Heart right ventricle (tissue), 16 donors: ENCODE measurements at regions of chr5 and their contacts with region 1.

Region 1: DNA sequence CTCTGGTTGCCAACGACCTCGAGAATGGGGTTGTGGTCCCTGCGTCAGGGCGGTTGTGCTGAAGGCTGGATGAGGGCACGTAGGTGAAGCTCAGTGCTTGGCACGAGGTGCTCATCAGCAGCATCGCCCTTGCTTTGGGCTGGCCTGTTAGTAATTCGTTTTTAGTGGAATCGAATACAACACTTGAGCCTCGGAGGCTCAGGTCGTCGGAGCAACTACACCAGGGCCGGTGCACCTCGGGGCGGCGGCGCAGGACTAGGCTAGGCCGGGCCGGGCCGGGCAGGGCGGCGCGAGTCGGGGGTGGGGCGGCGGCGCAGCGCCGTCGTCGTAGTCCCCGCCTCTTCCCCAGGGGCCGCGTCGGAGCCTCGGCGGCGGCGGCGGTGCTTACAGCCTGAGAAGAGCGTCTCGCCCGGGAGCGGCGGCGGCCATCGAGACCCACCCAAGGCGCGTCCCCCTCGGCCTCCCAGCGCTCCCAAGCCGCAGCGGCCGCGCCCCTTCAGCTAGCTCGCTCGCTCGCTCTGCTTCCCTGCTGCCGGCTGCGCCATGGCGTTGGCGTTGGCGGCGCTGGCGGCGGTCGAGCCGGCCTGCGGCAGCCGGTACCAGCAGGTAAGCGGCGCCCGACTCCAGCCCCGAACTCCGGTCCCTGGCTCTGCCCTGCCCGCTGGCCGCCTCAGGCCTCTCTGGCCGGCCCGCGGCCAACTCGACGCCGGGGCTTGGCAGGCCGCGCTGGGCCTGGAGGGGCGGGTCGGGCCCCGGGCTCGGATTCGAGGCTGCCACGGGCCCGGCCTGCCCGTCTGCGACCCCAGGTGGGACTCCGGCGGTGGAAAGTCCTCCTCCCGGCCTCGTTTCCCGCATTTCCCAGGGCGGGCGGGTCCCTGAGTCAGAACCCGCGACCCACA is at the start of gene NDFIP1:
- DNase-seq: peak; percentile 86 to 92
- ATAC-seq: peak; percentile 95 to 99 (median 98)
- H3K4me3 ChIP-seq: peak within 1 kb of the TSS; percentile 73 to 95 (median 85)
- H3K27ac ChIP-seq: peak within 1 kb of the TSS; percentile 96 to 100 (median 98)
- H3K4me1 ChIP-seq: peaks cover 0 to 61% (median 38%) of the 10 kb centered on the region in 9 donors
- H3K27me3 ChIP-seq: no peaks in the 10 kb centered on the region
- CTCF ChIP-seq: peak in 4 of 9 donors; percentile 5 to 39 (median 28)
- total RNA-seq, gene NDFIP1: 52.7 to 67.4 (median 60.7) TPM

Region 2: DNA sequence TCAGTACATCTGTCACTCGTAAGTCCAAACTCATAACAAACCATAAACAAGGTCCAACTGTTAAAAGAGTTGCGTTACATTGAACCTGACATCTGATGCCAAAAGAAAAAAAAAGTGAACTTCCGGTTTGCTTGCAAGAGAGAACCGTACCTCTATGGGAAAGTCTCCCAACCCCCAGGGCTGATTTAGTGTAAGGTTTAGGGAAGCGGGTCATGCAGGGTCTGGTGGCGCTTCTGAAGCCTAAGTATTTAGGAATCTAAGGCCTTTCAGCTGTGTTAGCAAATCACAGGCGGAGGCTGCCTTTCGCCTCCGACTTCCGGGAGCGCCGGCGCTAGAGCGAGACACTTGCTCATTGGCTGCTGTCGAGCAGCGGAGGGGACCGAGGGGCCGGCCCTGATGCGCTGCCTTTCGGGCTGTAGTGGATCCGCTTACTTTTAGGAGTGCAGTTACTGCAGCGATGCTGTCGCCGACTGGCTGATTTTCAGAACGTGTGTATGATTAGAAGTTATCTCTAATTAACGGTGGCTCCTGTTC is 83.8 kb before region 1 on chr5:
- intact Hi-C with region 1: loop called in 1 of 10 experiments (anchors 5 kb)
- DNase-seq: peak; percentile 85 to 88
- ATAC-seq: peak; percentile 98 to 100 (median 100)
- H3K4me3 ChIP-seq: peak overlapping the region; percentile 17 to 61 (median 54)
- H3K27ac ChIP-seq: peak overlapping the region in 9 of 10 donors; percentile 73 to 90 (median 87)
- H3K4me1 ChIP-seq: peaks cover 0 to 12% (median 5%) of the 10 kb centered on the region in 9 donors
- H3K27me3 ChIP-seq: no peaks in the 10 kb centered on the region
- CTCF ChIP-seq: no peak

Region 3: GRCh38 chr5:142034994-142035393 is 73.7 kb before region 1 on chr5:
- intact Hi-C with region 1: no loop called
- DNase-seq: no peak
- ATAC-seq: no peak
- H3K4me3 ChIP-seq: no peak overlapping the region
- H3K27ac ChIP-seq: no peak overlapping the region
- H3K4me1 ChIP-seq: peaks cover 0 to 8% (median 0%) of the 10 kb centered on the region in 9 donors
- H3K27me3 ChIP-seq: no peaks in the 10 kb centered on the region
- CTCF ChIP-seq: no peak

Region 4: DNA sequence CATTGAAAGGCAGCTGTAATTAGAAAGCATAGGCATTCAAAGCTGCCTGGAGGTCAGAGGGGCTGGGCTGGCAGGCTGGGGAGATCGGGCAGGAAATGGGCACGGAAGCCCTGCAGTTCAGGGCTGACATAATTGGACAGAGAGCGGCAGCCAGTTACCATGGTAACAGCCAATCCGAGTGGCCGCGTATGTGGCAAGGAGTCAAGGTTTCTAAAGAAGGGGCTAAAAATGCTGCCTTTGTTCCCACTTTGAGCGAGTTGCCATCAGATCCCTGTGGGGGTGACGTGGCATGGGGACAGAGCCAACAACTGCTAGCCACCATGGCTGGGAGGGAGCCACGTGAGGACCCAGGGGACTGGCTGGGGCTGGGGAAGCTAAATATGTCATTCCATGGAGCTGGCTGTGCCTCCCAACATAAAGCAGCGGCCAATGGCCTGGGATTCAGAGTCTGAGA is 44.8 kb before region 1 on chr5:
- intact Hi-C with region 1: loop called in 2 of 10 experiments (anchors 5 kb)
- DNase-seq: peak; percentile 77 to 81
- ATAC-seq: peak; percentile 84 to 92 (median 88)
- H3K4me3 ChIP-seq: peak overlapping the region in 7 of 10 donors; percentile 2 to 41 (median 36)
- H3K27ac ChIP-seq: peak overlapping the region in 8 of 10 donors; percentile 31 to 80 (median 71)
- H3K4me1 ChIP-seq: peaks cover 0 to 36% (median 16%) of the 10 kb centered on the region in 9 donors
- H3K27me3 ChIP-seq: no peaks in the 10 kb centered on the region
- CTCF ChIP-seq: no peak

Region 5: DNA sequence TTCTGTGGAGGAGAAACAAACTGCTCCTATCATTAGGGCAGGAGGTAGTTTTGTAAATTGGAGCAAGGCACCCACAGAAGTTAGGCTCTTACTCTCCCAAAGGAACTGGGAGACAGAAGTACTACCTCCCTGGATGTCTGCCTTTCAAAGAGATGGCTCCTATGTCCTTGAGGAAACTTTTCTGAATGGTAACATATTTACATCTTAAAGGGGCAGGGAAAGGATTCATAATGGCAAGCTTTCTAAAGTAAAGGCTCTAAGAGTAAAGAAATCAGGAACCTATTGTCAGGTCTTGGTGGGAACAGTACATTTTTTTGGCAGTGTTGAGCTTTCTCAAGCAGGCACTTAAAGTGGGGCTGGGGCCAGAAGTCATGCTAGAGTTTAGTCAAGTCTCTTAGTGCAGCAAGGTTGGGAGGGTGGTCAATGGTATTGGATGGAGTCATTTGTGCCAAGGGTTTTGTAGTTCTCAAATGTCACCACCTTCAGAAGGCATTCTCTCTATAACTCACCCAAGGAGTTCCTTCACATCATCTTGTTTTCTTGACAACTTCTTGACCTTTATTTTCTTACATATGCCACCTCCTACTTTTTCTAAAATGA is 26.4 kb before region 1 on chr5:
- intact Hi-C with region 1: no loop called
- DNase-seq: no peak
- ATAC-seq: no peak
- H3K4me3 ChIP-seq: no peak overlapping the region
- H3K27ac ChIP-seq: no peak overlapping the region
- H3K4me1 ChIP-seq: no peaks in the 10 kb centered on the region
- H3K27me3 ChIP-seq: no peaks in the 10 kb centered on the region
- CTCF ChIP-seq: no peak

Region 6: DNA sequence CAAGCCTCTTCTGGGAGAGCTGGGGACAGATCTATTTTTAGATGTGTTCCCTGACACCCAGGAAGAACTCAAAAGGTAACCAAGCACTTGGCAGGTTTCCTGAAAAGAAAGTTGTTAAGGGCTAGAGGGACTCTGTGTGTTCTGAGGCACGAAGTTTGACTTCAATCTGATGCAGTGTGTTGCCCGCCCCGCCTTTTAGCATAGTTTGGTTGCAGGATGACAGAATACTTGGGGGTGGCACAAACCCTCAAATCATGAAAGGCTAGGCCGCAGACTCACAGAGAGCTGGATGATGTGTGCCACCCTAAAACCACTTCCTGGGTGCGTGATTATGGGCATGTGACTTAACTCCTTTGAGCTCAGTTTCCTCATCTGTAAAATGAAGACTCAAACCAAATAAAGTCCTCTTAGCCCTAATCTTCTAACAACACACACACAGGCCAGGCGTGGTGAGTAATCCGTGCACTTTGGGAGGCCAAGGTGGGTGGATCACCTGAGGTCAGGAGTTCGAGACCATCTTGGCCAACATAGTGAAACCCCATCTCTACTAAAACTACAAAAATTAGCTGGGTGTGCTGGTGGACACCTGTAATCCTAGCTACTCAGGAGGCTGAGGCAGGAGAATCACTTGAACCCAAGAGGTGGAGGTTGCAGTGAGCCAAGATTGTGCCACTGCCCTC is 12.9 kb before region 1 on chr5:
- intact Hi-C with region 1: loop called in 1 of 10 experiments (anchors 2 kb)
- DNase-seq: peak in 1 of 2 donors; percentile 39
- ATAC-seq: peak; percentile 54 to 94 (median 88)
- H3K4me3 ChIP-seq: no peak overlapping the region
- H3K27ac ChIP-seq: peak overlapping the region; percentile 62 to 80 (median 76)
- H3K4me1 ChIP-seq: peaks cover 0 to 22% (median 16%) of the 10 kb centered on the region in 9 donors
- H3K27me3 ChIP-seq: no peaks in the 10 kb centered on the region
- CTCF ChIP-seq: no peak

Region 7: DNA sequence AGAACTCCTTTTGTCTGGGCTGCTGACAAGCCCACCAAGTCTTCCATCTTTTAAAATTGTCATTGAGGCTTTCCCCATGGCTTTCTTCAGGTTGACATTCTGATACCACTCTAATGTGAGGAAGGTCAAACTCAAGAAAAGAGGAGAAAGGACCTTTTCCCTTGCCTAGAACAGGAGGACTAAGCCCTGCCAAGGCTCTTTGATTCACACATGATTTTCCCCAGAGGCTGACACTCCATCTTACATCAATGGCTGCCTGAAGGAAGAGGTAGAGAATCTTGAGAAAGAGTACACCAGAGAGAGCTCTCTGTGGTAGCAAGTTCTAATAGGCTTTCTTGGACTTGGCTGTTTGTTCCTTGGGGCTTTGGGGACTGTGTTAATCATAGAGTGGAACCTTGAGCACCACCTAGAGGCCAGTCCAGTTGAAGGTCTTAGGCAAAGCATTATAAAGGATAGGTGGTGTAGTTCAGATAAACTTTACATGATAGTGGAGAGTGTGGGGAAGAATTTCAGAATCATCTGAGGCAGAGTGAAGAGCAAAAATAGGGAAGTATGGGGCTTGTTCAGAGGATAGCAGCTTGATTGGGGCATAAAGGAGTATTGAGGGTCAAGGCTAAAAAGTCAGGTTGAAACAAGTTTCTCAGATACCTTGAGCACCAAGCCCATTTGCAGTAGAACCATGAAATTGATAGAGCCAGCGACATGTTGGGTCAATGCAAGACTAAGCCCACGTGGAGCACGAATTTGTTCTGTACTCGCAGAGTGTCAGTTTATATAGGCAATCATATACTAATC is 36.6 kb after region 1 on chr5:
- intact Hi-C with region 1: no loop called
- DNase-seq: peak in 1 of 2 donors; percentile 80
- ATAC-seq: peak; percentile 71 to 91 (median 84)
- H3K4me3 ChIP-seq: no peak overlapping the region
- H3K27ac ChIP-seq: no peak overlapping the region
- H3K4me1 ChIP-seq: peaks cover 0 to 8% (median 0%) of the 10 kb centered on the region in 9 donors
- H3K27me3 ChIP-seq: no peaks in the 10 kb centered on the region
- CTCF ChIP-seq: peak; percentile 59 to 80 (median 72)